Panc1 (cell line): ENCODE measurements at regions of chr19 and their contacts with region 1.

Region 1: DNA sequence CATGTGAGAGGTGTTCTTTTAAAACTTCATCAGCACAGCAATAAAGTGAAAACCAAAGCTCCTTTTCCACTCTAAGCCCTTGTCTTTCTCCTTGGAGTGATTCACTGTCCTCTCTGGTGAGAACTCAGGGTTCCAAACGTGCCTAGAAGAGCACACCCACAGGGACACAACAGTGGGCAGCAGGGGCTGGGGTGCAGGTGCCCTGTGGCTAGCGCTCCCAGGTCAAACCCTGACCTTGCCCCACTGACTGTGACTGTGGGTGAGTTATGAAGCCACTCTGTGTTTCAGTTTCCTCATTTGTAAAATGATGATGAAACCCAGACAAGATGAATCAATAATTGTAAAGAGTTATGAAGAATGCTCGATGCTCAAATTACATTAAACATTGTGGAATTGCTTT is 37.6 kb upstream of the IGFL1 start:
- DNase-seq: no peak
- ATAC-seq: no peak
- H3K4me3 ChIP-seq: no peak overlapping the region
- H3K27ac ChIP-seq: no peak overlapping the region
- H3K4me1 ChIP-seq: no peaks in the 10 kb centered on the region; the same call in 1 of the 2 replicates
- H3K27me3 ChIP-seq: no peaks in the 10 kb centered on the region; the same call in 1 of the 2 replicates
- CTCF ChIP-seq: no peak

Region 2: DNA sequence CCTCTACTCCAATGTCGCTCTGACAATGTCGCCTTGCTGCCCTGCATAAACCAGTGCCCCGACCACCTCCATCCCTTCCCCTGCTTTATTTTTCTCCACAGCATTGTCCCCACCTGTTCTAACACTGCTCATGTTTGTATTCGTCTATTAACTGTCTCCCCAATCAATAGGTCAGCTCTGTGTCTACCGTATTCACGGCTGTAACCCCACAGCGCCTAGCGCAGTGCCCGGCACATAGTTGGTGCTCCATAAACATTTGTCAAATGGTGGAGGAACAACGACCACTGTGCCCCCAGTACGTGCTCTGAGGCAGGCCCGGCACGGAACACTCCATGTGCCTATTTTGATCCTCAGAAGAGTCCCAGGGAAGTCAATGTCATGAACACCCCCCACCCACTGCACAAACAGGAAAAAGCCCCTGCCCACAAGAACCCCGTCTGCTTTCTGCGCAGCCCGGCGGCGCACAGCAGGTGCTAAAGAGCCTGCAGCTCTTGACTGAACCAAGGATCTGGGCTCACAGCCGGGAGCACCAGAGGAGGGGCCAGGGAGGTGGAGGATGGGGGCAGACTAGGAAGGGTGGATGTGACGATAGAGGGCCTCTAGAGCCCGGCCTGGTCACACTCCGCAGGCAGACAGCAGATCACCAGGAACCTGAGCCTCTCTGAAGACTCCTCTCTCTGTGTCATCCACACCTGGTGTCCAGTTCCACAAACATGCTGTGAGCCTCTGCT is 1494.9 kb before region 1 on chr19:
- CTCF ChIA-PET with region 1: no interaction called
- POLR2A ChIA-PET with region 1: no interaction called
- in situ Hi-C with region 1: no loop called
- intact Hi-C with region 1: no loop called
- DNase-seq: no peak
- ATAC-seq: 0 out of 2 replicates have a peak, but pooled peaks have one; percentile 22
- H3K4me3 ChIP-seq: no peak overlapping the region
- H3K27ac ChIP-seq: no peak overlapping the region
- H3K4me1 ChIP-seq: peaks cover 8% of the 10 kb centered on the region
- H3K27me3 ChIP-seq: no peaks in the 10 kb centered on the region
- CTCF ChIP-seq: no peak

Region 3: DNA sequence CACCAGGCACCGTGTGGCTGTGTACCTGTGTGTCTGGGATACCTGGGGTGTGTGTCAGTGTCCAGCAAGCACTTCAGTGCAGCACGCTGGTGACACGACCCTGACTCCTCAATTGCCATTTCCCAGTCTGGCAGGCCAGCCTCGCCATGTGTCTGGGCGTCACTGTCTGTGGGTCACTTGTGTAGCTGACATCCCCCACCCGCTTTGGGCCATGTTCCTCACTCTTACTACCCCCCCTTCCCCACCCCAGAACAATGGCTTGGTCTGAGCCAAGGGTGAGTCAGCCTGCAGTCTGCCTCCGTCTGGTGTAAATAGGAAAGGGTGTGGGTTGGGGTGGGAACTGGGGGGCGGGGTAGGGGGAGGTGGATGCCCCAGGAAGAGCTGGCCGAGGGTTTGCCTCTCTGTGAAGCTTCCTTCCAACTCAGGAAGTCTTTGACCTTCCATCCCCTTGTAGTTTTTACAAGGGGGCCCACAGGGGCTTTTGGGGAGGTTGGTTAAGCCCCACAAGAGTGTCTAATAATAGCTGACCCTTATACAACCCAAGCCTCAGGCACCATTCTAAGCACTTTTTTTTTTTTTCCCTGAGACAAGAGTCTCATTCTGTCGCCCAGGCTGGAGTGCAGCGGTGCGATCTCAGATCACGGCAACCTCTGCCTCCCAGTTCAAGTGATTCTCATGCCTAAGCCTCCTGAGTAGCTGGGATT is 235.9 kb before region 1 on chr19:
- CTCF ChIA-PET with region 1: no interaction called
- POLR2A ChIA-PET with region 1: no interaction called
- in situ Hi-C with region 1: no loop called
- intact Hi-C with region 1: no loop called
- DNase-seq: no peak
- ATAC-seq: no peak
- H3K4me3 ChIP-seq: no peak overlapping the region
- H3K27ac ChIP-seq: no peak overlapping the region
- H3K4me1 ChIP-seq: no peaks in the 10 kb centered on the region
- H3K27me3 ChIP-seq: no peaks in the 10 kb centered on the region
- CTCF ChIP-seq: no peak

Region 4: GRCh38 chr19:46115396-46116106 is 76.4 kb before region 1 on chr19:
- CTCF ChIA-PET with region 1: no interaction called
- POLR2A ChIA-PET with region 1: no interaction called
- in situ Hi-C with region 1: no loop called
- intact Hi-C with region 1: loop called (anchors 2 kb)
- DNase-seq: no peak
- ATAC-seq: peak; percentile 78; the same call in 1 of the 2 replicates
- H3K4me3 ChIP-seq: no peak overlapping the region
- H3K27ac ChIP-seq: no peak overlapping the region
- H3K4me1 ChIP-seq: no peaks in the 10 kb centered on the region; the same call in 1 of the 2 replicates
- H3K27me3 ChIP-seq: peaks cover 2% of the 10 kb centered on the region
- CTCF ChIP-seq: no peak

Region 5: DNA sequence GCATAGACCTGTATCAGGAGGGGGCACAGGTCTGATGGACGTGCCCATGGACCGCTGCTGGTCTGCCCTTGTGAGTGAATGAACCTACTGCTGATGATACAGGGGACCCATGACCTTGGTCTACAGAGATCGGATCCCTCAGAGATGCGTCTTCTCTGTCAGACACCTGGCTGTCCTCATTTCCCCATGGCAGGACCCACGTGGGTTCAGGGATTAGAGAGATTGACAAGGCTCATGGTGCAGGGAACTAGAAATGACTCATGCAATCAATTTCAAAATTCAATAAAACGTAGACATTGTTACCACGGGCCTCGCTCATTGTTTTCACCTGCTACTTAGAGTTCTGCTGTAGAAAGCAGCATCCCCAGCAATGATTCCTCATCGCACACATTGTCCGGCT is 1613.3 kb after region 1 on chr19:
- CTCF ChIA-PET with region 1: no interaction called
- POLR2A ChIA-PET with region 1: no interaction called
- in situ Hi-C with region 1: no loop called
- intact Hi-C with region 1: no loop called
- DNase-seq: no peak
- ATAC-seq: no peak
- H3K4me3 ChIP-seq: no peak overlapping the region
- H3K27ac ChIP-seq: no peak overlapping the region
- H3K4me1 ChIP-seq: no peaks in the 10 kb centered on the region
- H3K27me3 ChIP-seq: no peaks in the 10 kb centered on the region
- CTCF ChIP-seq: no peak